ENCODE measurements at regions of chr7 and their contacts with region 1.

Region 1: DNA sequence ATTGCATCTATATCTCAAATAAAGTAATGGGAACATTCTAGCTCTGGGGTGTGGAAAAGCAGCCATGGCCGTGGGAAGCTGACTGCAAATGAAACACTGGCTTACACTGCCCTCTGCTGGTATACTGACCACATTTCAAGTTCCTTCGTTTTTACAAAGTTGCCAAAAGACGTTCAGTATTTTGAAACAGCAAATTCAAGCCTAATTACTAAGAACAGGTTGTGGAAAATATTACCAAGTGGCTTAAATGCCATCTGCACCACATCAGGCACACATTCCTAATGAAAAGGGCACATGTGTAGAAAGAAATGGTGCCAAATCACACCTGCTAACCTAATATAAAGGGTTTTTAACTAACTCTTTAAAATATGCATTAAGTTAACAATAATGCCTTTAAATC is 83.9 kb downstream of the JAZF1 start:
- DNase-seq: peak; percentile 69
- ATAC-seq: peak; percentile 68
- H3K4me3 ChIP-seq: no peak overlapping the region
- H3K4me3 Mint-ChIP-seq: no peak overlapping the region
- H3K27ac ChIP-seq: no peak overlapping the region
- H3K27ac Mint-ChIP-seq: no peak overlapping the region
- H3K4me1 ChIP-seq: peaks cover 13 to 14% of the 10 kb centered on the region in 2 donors
- H3K4me1 Mint-ChIP-seq: peaks cover 38% of the 10 kb centered on the region
- H3K27me3 ChIP-seq: no peaks in the 10 kb centered on the region
- H3K27me3 Mint-ChIP-seq: no peaks in the 10 kb centered on the region
- CTCF ChIP-seq: peak; percentile 99

Region 2: GRCh38 chr7:27767374-27767773 is 329.3 kb before region 1 on chr7:
- CTCF ChIA-PET with region 1: no interaction called
- POLR2A ChIA-PET with region 1: no interaction called
- intact Hi-C with region 1: no loop called
- DNase-seq: no peak
- ATAC-seq: no peak
- H3K4me3 ChIP-seq: no peak overlapping the region
- H3K4me3 Mint-ChIP-seq: no peak overlapping the region
- H3K27ac ChIP-seq: no peak overlapping the region
- H3K27ac Mint-ChIP-seq: no peak overlapping the region
- H3K4me1 ChIP-seq: no peaks in the 10 kb centered on the region
- H3K4me1 Mint-ChIP-seq: peaks cover 3% of the 10 kb centered on the region
- H3K27me3 ChIP-seq: no peaks in the 10 kb centered on the region
- H3K27me3 Mint-ChIP-seq: no peaks in the 10 kb centered on the region
- CTCF ChIP-seq: no peak

Region 3: GRCh38 chr7:27784393-27785053 is 312.2 kb before region 1 on chr7:
- CTCF ChIA-PET with region 1: interaction called, 10 read pairs
- POLR2A ChIA-PET with region 1: no interaction called
- intact Hi-C with region 1: no loop called
- DNase-seq: peak; percentile 59
- ATAC-seq: peak; percentile 28
- H3K4me3 ChIP-seq: no peak overlapping the region
- H3K4me3 Mint-ChIP-seq: no peak overlapping the region
- H3K27ac ChIP-seq: no peak overlapping the region
- H3K27ac Mint-ChIP-seq: no peak overlapping the region
- H3K4me1 ChIP-seq: no peaks in the 10 kb centered on the region
- H3K4me1 Mint-ChIP-seq: no peaks in the 10 kb centered on the region
- H3K27me3 ChIP-seq: no peaks in the 10 kb centered on the region
- H3K27me3 Mint-ChIP-seq: no peaks in the 10 kb centered on the region
- CTCF ChIP-seq: peak; percentile 80

Region 4: GRCh38 chr7:28062197-28062991 is 34.3 kb before region 1 on chr7:
- CTCF ChIA-PET with region 1: interaction called, 41 read pairs
- POLR2A ChIA-PET with region 1: no interaction called
- intact Hi-C with region 1: loop called (anchors 2 kb)
- DNase-seq: peak; percentile 47
- ATAC-seq: peak; percentile 62
- H3K4me3 ChIP-seq: no peak overlapping the region
- H3K4me3 Mint-ChIP-seq: no peak overlapping the region
- H3K27ac ChIP-seq: no peak overlapping the region
- H3K27ac Mint-ChIP-seq: no peak overlapping the region
- H3K4me1 ChIP-seq: peaks cover 0 to 6% of the 10 kb centered on the region in 2 donors
- H3K4me1 Mint-ChIP-seq: peaks cover 44% of the 10 kb centered on the region
- H3K27me3 ChIP-seq: no peaks in the 10 kb centered on the region
- H3K27me3 Mint-ChIP-seq: no peaks in the 10 kb centered on the region
- CTCF ChIP-seq: peak; percentile 67

Region 5: GRCh38 chr7:28078036-28078901 is 18.4 kb before region 1 on chr7:
- CTCF ChIA-PET with region 1: interaction called, 60 read pairs
- POLR2A ChIA-PET with region 1: no interaction called
- intact Hi-C with region 1: no loop called
- DNase-seq: peak; percentile 64
- ATAC-seq: peak; percentile 68
- H3K4me3 ChIP-seq: no peak overlapping the region
- H3K4me3 Mint-ChIP-seq: no peak overlapping the region
- H3K27ac ChIP-seq: no peak overlapping the region
- H3K27ac Mint-ChIP-seq: no peak overlapping the region
- H3K4me1 ChIP-seq: peaks cover 9 to 15% of the 10 kb centered on the region in 2 donors
- H3K4me1 Mint-ChIP-seq: peaks cover 44% of the 10 kb centered on the region
- H3K27me3 ChIP-seq: no peaks in the 10 kb centered on the region
- H3K27me3 Mint-ChIP-seq: no peaks in the 10 kb centered on the region
- CTCF ChIP-seq: peak; percentile 100

Region 6: GRCh38 chr7:28123752-28124151 is 27.0 kb after region 1 on chr7:
- CTCF ChIA-PET with region 1: interaction called, 15 read pairs
- POLR2A ChIA-PET with region 1: no interaction called
- intact Hi-C with region 1: no loop called
- DNase-seq: no peak
- ATAC-seq: no peak
- H3K4me3 ChIP-seq: no peak overlapping the region
- H3K4me3 Mint-ChIP-seq: peak overlapping the region; percentile 29
- H3K27ac ChIP-seq: peak overlapping the region in 1 of 2 donors; percentile 41
- H3K27ac Mint-ChIP-seq: peak overlapping the region; percentile 33
- H3K4me1 ChIP-seq: peaks cover 82 to 94% of the 10 kb centered on the region in 2 donors
- H3K4me1 Mint-ChIP-seq: peaks cover 96% of the 10 kb centered on the region
- H3K27me3 ChIP-seq: no peaks in the 10 kb centered on the region
- H3K27me3 Mint-ChIP-seq: no peaks in the 10 kb centered on the region
- CTCF ChIP-seq: no peak

Region 7: DNA sequence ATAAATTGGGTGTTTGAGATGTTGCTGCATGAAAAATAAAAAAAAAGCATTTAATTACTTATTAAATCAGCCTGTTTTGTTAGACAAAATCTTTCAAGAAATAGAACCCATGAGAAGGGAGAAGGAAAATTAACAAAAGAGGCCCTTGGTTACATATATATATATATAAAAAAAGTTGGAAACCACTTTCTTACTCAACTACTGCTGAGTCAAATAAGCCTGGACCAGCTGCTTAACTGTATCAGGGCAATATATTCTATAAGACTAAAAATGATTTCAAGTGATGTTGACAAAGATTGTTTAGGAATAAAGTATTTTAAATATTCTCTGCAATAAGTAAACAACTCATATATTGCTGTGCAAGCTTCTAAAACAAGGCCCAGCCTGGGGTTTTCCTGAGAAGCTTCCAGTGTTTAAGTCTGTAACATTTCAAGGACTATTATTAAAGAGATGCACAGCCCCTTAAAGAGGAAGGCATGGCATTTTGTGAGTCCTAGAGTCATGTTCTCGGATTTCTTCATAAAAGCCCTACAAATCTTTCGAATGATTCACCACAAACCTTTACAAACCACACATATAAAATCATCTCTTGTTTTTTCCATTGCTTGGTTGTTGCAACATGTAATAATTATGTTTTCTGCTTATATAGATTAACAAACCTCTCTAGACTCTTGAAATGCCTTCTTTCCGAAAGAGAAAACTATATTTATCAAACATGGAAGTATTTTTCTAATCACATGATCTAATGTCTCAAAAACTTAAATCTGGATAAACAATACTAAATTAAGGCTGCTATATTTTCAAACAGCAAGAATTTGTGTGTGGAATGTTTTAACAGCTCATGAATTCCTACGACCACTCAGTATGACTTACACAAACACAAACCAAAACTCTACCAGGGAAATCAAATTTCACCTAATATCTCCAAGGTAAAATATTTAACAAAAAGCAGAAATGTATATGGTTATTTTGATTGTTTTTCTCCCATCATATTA is 69.5 kb after region 1 on chr7:
- CTCF ChIA-PET with region 1: interaction called, 23 read pairs
- POLR2A ChIA-PET with region 1: no interaction called
- intact Hi-C with region 1: no loop called
- DNase-seq: no peak
- ATAC-seq: no peak
- H3K4me3 ChIP-seq: peak overlapping the region in 1 of 5 experiments; percentile 38
- H3K4me3 Mint-ChIP-seq: no peak overlapping the region
- H3K27ac ChIP-seq: peak overlapping the region; percentile 56 to 59
- H3K27ac Mint-ChIP-seq: no peak overlapping the region
- H3K4me1 ChIP-seq: peaks cover 95% of the 10 kb centered on the region in 2 donors
- H3K4me1 Mint-ChIP-seq: peaks cover 93% of the 10 kb centered on the region
- H3K27me3 ChIP-seq: no peaks in the 10 kb centered on the region
- H3K27me3 Mint-ChIP-seq: no peaks in the 10 kb centered on the region
- CTCF ChIP-seq: no peak

Region 8: GRCh38 chr7:28272461-28272877 is 175.8 kb after region 1 on chr7:
- CTCF ChIA-PET with region 1: interaction called, 10 read pairs
- POLR2A ChIA-PET with region 1: no interaction called
- intact Hi-C with region 1: no loop called
- DNase-seq: peak; percentile 76
- ATAC-seq: peak; percentile 68
- H3K4me3 ChIP-seq: peak overlapping the region in 3 of 5 experiments; percentile 13 to 51 (median 27)
- H3K4me3 Mint-ChIP-seq: peak overlapping the region; percentile 60
- H3K27ac ChIP-seq: no peak overlapping the region
- H3K27ac Mint-ChIP-seq: no peak overlapping the region
- H3K4me1 ChIP-seq: peaks cover 14 to 22% of the 10 kb centered on the region in 2 donors
- H3K4me1 Mint-ChIP-seq: peaks cover 25% of the 10 kb centered on the region
- H3K27me3 ChIP-seq: no peaks in the 10 kb centered on the region
- H3K27me3 Mint-ChIP-seq: no peaks in the 10 kb centered on the region
- CTCF ChIP-seq: peak; percentile 80

Measured in B cell (primary cell).